Breast epithelium (tissue), 4 donors: ENCODE measurements at regions of chr4 and their contacts with region 1.

Region 1: DNA sequence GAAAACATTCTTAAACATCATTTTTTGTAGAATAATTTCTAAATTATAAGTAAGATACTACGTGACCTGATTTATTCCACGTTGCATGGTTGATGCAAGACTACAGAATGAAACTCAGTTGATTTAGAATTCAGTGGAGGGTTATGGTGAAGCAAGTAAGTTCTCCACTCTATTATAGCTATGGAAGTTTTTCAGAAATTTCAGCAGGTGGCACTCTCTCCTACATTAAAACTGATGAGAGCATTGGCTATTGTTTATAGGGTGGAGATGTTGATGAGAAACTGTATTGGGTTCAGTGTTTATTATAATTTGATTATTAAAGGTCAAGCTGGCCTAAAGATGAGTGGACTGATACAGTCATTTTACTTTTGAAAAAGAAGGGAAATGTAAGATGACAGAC is 88.0 kb downstream of the FNIP2 start:
- DNase-seq: no peak
- H3K4me3 ChIP-seq: no peak overlapping the region
- H3K27ac ChIP-seq: no peak overlapping the region
- H3K4me1 ChIP-seq: no peaks in the 10 kb centered on the region
- H3K27me3 ChIP-seq: no peaks in the 10 kb centered on the region
- CTCF ChIP-seq: peak; percentile 30 to 64 (median 54)
- POLR2A ChIP-seq: no peak

Region 2: GRCh38 chr4:158826882-158827281 is 30.0 kb before region 1 on chr4:
- intact Hi-C with region 1: no loop called
- DNase-seq: no peak
- H3K4me3 ChIP-seq: no peak overlapping the region
- H3K27ac ChIP-seq: no peak overlapping the region
- H3K4me1 ChIP-seq: peaks cover 0 to 3% of the 10 kb centered on the region in 2 donors
- H3K27me3 ChIP-seq: no peaks in the 10 kb centered on the region
- CTCF ChIP-seq: no peak
- POLR2A ChIP-seq: no peak

Region 3: DNA sequence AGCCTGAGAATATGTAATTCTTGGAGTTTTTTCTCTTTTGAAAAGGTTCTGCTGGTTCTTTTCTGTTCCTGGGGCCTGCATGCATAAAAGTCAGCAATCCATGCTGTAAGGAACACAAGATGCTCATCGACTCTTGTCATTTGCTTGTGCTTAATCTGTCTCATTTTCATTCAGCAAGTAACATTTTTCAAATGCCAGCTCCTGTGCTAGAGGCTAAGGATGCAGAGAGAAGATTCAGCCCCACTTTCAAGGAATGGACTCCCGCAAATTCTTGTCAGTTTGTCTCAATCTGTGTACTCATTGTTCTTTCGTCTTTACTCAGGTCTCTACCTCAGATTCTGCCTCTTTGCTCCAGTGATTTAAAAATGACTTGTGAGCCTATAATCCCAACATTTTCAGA is 31.4 kb after region 1 on chr4:
- intact Hi-C with region 1: loop called (anchors 2 kb)
- DNase-seq: no peak
- H3K4me3 ChIP-seq: no peak overlapping the region
- H3K27ac ChIP-seq: no peak overlapping the region
- H3K4me1 ChIP-seq: no peaks in the 10 kb centered on the region
- H3K27me3 ChIP-seq: no peaks in the 10 kb centered on the region
- CTCF ChIP-seq: no peak
- POLR2A ChIP-seq: no peak

Region 4: GRCh38 chr4:158914218-158914617 is 57.4 kb after region 1 on chr4:
- intact Hi-C with region 1: no loop called
- DNase-seq: no peak
- H3K4me3 ChIP-seq: no peak overlapping the region
- H3K27ac ChIP-seq: peak overlapping the region in 1 of 2 donors; percentile 35
- H3K4me1 ChIP-seq: no peaks in the 10 kb centered on the region
- H3K27me3 ChIP-seq: no peaks in the 10 kb centered on the region
- CTCF ChIP-seq: no peak
- POLR2A ChIP-seq: no peak

Region 5: DNA sequence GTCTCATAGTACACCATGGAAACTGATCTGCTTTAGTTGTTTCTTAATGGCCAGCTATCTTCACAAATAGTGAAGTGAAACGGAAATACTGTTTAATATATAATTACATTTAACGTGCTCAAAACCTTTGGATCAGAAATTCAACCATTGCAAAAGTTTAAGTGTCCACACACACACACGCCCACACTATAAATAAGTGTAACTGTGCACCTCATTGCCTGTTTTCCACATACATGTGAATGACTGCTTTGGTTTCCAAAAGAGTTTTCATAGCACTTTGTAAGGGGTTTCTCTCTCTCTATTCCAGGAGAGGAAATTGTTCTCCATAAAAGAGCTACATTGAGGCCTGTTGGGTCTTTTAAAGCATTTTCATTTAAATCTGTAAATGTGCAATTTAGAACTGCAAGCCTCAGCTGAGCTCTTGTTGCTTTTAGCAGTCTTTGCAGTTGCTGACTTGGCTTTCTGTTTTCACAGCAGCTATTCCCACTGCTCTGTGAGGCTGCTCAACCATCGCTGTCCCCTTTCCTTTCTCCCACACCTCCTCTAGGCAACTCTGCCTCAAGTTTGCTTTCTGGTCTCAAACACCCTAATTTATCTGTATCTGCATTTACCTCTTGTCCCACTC is 340.5 kb after region 1 on chr4:
- intact Hi-C with region 1: loop called (anchors 5 kb)
- DNase-seq: no peak
- H3K4me3 ChIP-seq: no peak overlapping the region
- H3K27ac ChIP-seq: no peak overlapping the region
- H3K4me1 ChIP-seq: no peaks in the 10 kb centered on the region
- H3K27me3 ChIP-seq: no peaks in the 10 kb centered on the region
- CTCF ChIP-seq: no peak
- POLR2A ChIP-seq: no peak